Left cardiac atrium (tissue), 4 donors: ENCODE measurements at regions of chr18 and their contacts with region 1.

Region 1: GRCh38 chr18:48675352-48675761 is 136.5 kb downstream of the CTIF start:
- DNase-seq: peak; percentile 90
- ATAC-seq: peak; percentile 88 to 91

Region 2: DNA sequence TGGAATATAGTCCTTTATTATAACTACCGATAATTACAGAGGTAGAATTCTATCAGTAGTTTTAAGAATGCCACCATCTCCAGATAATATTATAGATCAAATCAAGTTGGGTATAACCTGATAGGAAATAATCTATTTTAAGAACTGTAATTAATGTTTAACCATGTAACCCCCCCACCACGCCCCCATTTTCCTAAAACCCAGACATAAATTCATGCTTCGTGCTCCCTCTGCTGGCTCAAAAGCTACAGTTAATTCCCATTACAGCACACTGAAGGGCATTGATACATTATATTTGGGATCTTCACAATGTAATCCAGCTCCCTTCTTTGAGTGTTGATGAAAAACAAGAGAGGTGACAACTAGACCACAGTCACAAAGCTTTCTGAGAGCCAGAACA is 503.4 kb after region 1 on chr18:
- intact Hi-C with region 1: loop called (anchors 2 to 10 kb)
- DNase-seq: peak; percentile 34
- ATAC-seq: peak in 1 of 2 donors; percentile 41

Region 3: GRCh38 chr18:49238433-49239042 is 563.2 kb after region 1 on chr18:
- intact Hi-C with region 1: loop called (anchors 10 kb)
- DNase-seq: no peak
- ATAC-seq: no peak

Region 4: GRCh38 chr18:49412679-49413078 is 737.3 kb after region 1 on chr18:
- intact Hi-C with region 1: loop called in 1 of 2 experiments (anchors 10 kb)
- DNase-seq: no peak
- ATAC-seq: no peak